GM12878 (cell line): ENCODE measurements at regions of chr6 and their contacts with region 1.

Region 1: GRCh38 chr6:87139236-87139635 is 16.1 kb upstream of the ZNF292 start:
- DNase-seq: no peak
- ATAC-seq: peak; percentile 91
- H3K4me3 ChIP-seq: no peak overlapping the region
- H3K27ac ChIP-seq: no peak overlapping the region
- H3K4me1 ChIP-seq: no peaks in the 10 kb centered on the region
- H3K27me3 ChIP-seq: no peaks in the 10 kb centered on the region
- CTCF ChIP-seq: peak; percentile 69 to 84 (median 77)
- EP300 ChIP-seq: no peak
- POLR2A ChIP-seq: no peak
- RAD21 ChIP-seq: peak; percentile 95

Region 2: GRCh38 chr6:87045521-87046075 is 93.6 kb before region 1 on chr6:
- CTCF ChIA-PET with region 1: no interaction called
- POLR2A ChIA-PET with region 1: no interaction called
- RAD21 ChIA-PET with region 1: no interaction called
- SMC1A ChIA-PET with region 1: no interaction called
- in situ Hi-C with region 1: no loop called
- intact Hi-C with region 1: no loop called
- DNase-seq: no peak
- ATAC-seq: no peak
- H3K4me3 ChIP-seq: no peak overlapping the region
- H3K27ac ChIP-seq: no peak overlapping the region
- H3K4me1 ChIP-seq: peaks cover 4% of the 10 kb centered on the region
- H3K27me3 ChIP-seq: no peaks in the 10 kb centered on the region; a peak in 1 of 4 replicates
- CTCF ChIP-seq: no peak
- EP300 ChIP-seq: no peak
- POLR2A ChIP-seq: no peak
- RAD21 ChIP-seq: no peak

Region 3: DNA sequence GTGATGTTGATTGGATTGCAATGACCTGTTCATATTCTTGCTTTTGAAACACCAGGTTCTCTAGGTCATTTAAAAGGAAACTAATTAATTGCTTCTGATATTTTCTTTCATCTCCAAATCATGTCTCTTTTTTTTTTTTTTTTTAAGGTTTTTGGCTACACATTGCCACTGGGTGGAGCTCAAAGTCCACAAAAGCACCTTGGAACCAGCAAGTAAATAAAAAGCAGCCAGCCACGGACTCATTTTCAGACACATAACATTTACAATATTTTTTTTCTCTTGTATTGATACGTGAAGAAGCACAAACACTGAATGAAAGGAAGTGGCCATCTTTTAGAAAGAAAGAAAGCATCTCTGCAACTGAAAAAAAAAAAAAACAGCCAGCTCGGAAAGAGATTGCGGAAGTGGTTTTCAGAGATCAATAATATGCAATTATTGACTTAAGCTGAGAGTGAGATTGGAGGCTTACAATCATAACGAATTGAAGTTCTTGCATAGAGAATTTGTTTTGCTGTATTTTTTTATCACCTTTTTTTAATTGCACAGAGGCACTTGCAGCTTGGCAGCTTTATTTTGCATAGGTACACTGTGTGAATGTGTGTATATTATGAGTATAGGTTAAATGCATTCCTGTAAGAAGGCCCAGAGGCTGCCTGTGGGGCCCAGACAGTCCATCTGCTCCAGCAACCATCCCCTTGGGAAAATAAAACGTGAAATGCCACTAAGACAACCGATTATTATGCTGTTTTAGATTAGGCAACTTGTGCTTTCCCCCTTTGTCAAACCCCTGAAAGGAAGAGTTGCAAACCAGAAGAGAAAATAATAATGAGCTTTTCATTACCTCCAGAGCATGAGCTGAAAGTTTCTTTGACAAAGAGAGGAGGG is 72.5 kb before region 1 on chr6:
- CTCF ChIA-PET with region 1: interaction called, 22 read pairs
- POLR2A ChIA-PET with region 1: no interaction called
- RAD21 ChIA-PET with region 1: interaction called, 8 read pairs
- SMC1A ChIA-PET with region 1: interaction called, 9 read pairs
- in situ Hi-C with region 1: no loop called
- intact Hi-C with region 1: loop called (anchors 5 kb)
- DNase-seq: peak; percentile 28
- ATAC-seq: peak; percentile 53; the same call in 2 of the 3 replicates
- H3K4me3 ChIP-seq: no peak overlapping the region
- H3K27ac ChIP-seq: no peak overlapping the region
- H3K4me1 ChIP-seq: peaks cover 4% of the 10 kb centered on the region
- H3K27me3 ChIP-seq: no peaks in the 10 kb centered on the region
- CTCF ChIP-seq: peak; percentile 44 to 77 (median 62); a peak in 5 of 6 replicates
- EP300 ChIP-seq: no peak
- POLR2A ChIP-seq: no peak
- RAD21 ChIP-seq: peak; percentile 89

Region 4: DNA sequence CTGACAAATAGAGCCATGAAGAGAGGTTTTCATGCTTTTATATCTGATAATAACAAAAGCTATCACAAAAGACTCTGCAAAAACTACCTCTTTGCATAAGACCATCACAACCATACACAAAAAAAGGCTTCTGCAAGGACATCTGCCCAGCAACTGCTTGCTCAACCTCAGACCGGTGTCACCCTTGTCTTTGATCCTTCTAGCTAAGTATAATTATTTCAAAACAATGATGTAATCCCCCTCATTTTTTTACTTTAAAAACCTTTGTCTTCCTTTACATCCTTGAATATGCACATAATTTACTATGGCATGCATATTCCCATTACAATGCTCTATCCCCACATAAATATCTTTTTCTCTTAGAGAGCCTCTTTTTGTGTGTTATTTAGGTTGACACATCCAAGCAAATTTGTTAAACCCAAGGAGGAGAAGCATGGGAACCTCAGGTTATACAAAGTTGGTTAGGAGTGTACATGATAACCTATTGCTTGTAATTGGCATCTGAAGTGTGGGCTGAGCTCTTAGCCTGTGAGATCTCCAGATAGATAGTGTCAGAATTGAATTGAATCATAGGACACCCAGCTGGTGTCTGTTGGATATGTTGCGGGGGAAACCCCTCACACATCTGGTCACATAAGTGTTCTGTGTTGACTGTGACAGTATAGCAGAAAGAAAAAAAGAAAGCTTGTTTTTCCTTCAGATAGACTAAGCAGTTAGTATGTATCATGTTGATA is 23.7 kb before region 1 on chr6:
- CTCF ChIA-PET with region 1: interaction called, 15 read pairs
- POLR2A ChIA-PET with region 1: no interaction called
- RAD21 ChIA-PET with region 1: no interaction called
- SMC1A ChIA-PET with region 1: no interaction called
- in situ Hi-C with region 1: no loop called
- intact Hi-C with region 1: no loop called
- DNase-seq: no peak
- ATAC-seq: peak; percentile 96
- H3K4me3 ChIP-seq: no peak overlapping the region
- H3K27ac ChIP-seq: no peak overlapping the region
- H3K4me1 ChIP-seq: no peaks in the 10 kb centered on the region
- H3K27me3 ChIP-seq: no peaks in the 10 kb centered on the region
- CTCF ChIP-seq: no peak
- EP300 ChIP-seq: 0 out of 4 replicates have a peak, but pooled peaks of 1 of the 2 experiments have one; percentile 38
- POLR2A ChIP-seq: no peak
- RAD21 ChIP-seq: no peak

Region 5: DNA sequence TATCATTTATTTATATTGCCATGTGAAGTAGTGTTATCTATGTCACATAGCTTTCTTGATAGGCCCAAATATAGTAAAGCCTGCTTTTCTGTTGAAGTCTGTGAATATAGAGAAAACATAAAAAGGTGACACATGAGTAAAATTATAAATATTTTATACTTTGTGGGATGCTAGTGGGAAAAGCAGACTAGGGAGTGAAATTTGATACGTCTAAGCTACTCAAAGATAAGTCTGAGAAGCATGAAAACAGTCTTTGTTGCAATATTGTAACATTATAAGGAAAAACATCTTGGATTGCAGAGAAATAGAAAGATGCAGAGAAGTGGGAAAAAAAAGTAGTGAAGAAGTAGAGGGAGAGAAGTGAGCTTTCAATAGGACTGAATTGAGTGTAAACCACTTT is 91.6 kb after region 1 on chr6:
- CTCF ChIA-PET with region 1: interaction called, 5 read pairs
- POLR2A ChIA-PET with region 1: no interaction called
- RAD21 ChIA-PET with region 1: interaction called, 3 read pairs
- SMC1A ChIA-PET with region 1: interaction called, 14 read pairs
- in situ Hi-C with region 1: loop called (anchors 5 kb)
- intact Hi-C with region 1: no loop called
- DNase-seq: no peak
- ATAC-seq: no peak
- H3K4me3 ChIP-seq: no peak overlapping the region
- H3K27ac ChIP-seq: no peak overlapping the region
- H3K4me1 ChIP-seq: no peaks in the 10 kb centered on the region
- H3K27me3 ChIP-seq: no peaks in the 10 kb centered on the region
- CTCF ChIP-seq: no peak
- EP300 ChIP-seq: no peak
- POLR2A ChIP-seq: no peak
- RAD21 ChIP-seq: no peak

Region 6: DNA sequence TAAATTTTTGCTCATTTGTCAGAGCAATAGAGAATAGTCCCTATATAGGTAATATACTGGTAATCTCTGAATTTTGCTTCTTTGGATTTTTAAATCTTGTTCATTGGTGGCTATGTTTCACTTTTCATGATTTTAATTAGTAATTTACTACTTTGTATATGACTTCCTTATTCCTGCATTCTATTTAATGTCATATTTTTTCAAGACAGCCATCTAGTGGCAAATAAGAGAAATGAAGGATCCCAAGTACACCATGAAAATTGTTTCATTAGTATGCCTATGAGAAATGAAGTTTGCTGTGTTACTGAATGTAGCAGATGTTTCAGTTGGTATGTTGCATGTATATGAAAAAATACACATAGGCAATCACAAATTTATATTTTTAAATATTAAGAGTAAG is 98.6 kb after region 1 on chr6:
- CTCF ChIA-PET with region 1: interaction called, 10 read pairs
- POLR2A ChIA-PET with region 1: no interaction called
- RAD21 ChIA-PET with region 1: interaction called, 3 read pairs
- SMC1A ChIA-PET with region 1: interaction called, 14 read pairs
- in situ Hi-C with region 1: loop called (anchors 5 kb)
- intact Hi-C with region 1: loop called (anchors 1 kb)
- DNase-seq: no peak
- ATAC-seq: peak; percentile 84
- H3K4me3 ChIP-seq: no peak overlapping the region
- H3K27ac ChIP-seq: no peak overlapping the region
- H3K4me1 ChIP-seq: no peaks in the 10 kb centered on the region
- H3K27me3 ChIP-seq: no peaks in the 10 kb centered on the region
- CTCF ChIP-seq: peak in 2 of 3 experiments; percentile 31 to 38; a peak in 4 of 6 replicates
- EP300 ChIP-seq: no peak
- POLR2A ChIP-seq: no peak
- RAD21 ChIP-seq: peak; percentile 27; the same call in 1 of the 2 replicates